Ascending aorta (tissue), 2 donors: ENCODE measurements at regions of chr7 and their contacts with region 1.

Region 1: GRCh38 chr7:45013465-45013967 is 13.5 kb downstream of the CCM2 start:
- DNase-seq: no peak
- H3K4me3 ChIP-seq: no peak overlapping the region
- H3K27ac ChIP-seq: no peak overlapping the region
- H3K4me1 ChIP-seq: no peaks in the 10 kb centered on the region
- H3K27me3 ChIP-seq: no peaks in the 10 kb centered on the region
- CTCF ChIP-seq: no peak

Region 2: GRCh38 chr7:44867073-44867995 is 146.2 kb before region 1 on chr7:
- intact Hi-C with region 1: no loop called
- DNase-seq: no peak
- H3K4me3 ChIP-seq: no peak overlapping the region
- H3K27ac ChIP-seq: no peak overlapping the region
- H3K4me1 ChIP-seq: no peaks in the 10 kb centered on the region
- H3K27me3 ChIP-seq: no peaks in the 10 kb centered on the region
- CTCF ChIP-seq: no peak

Region 3: DNA sequence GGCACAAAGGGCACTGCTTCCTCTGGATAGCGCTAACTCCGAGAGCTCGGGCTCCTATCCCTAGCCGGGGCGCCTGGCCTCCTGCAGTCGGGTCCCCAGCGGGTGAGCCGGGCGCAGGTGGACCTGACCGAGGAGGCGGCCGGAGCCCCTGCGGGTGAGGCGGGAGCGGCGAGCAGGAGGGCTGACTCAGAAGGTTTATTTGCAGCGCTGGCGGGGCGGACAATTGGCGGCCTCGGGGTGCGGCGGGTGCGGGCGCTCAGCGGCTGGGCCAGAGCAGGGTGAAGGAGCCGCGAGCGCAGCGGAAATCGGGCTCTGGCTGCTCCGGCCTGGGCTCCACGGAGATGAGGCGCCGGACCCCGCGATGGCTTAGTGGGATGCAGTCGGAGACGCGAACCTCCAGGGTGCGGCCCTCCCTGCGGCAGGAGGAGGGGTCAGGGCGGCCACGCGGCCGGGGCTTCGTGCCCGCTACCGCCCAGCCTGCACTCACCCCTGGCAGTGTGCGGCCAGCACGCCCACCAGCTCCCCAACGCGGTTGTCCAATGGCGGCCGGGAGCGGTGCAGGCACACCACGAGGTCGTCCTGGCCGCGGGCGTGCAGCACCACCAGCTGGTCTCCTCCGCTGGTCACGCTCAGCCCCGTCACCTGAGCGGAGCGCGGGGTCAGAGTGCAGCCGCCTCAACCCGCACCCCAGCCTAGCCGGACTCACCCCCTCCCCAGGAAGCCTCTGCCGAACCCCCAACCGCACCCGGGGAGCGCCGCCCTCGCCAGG is 50.8 kb before region 1 on chr7:
- intact Hi-C with region 1: loop called (anchors 10 kb)
- DNase-seq: no peak
- H3K4me3 ChIP-seq: peak overlapping the region; percentile 50 to 73
- H3K27ac ChIP-seq: no peak overlapping the region
- H3K4me1 ChIP-seq: peaks cover 3 to 4% of the 10 kb centered on the region in 2 donors
- H3K27me3 ChIP-seq: no peaks in the 10 kb centered on the region
- CTCF ChIP-seq: no peak

Region 4: DNA sequence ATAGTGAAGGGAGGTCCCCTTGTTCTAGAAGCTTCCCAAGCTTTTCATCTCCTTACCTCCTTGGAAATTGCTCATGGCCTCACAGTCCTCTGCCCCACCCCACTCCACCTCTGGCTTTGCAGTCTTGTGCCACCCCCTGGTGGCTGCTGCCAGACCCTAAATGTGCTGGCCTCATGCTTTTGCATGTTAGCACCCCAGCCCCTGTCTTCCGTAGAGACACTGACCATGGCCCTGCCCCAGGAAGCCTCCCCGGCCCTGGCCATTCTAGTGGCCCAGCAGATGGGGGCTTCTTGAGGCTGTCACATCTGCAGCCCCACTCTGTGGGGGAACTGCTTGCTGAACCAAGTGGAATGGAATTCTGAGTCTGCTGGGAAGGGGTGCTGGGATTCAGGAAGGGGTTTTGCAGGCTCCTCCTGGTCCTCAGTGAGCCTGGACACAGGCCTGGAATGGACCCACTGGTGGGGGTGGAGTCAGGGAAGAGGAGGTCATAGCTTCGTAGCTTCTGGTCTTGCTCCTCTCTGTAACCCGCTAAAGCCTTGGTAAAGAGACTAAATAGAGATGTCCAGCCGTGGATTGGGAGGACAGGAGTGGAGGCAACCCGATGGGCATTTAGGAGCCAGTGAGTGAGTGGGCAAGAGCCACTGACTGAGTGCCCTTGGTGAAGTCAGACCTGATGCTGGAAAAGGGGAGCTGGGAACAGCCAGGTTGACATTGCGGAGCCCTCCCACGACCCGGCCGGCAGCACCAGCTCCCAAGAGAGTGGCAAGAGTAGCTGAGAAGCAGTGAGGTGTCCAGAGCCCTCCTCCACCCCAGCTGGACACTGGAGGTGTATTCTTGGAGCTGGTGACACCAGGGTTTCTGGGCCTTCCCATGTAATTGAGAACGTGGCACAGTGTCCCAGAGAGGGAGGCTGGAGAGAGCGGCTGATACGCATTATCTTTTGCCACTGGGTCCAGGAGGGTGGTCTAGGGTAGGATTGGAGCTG is 165.0 kb after region 1 on chr7:
- intact Hi-C with region 1: no loop called
- DNase-seq: peak in 1 of 2 donors; percentile 39
- H3K4me3 ChIP-seq: no peak overlapping the region
- H3K27ac ChIP-seq: no peak overlapping the region
- H3K4me1 ChIP-seq: no peaks in the 10 kb centered on the region
- H3K27me3 ChIP-seq: no peaks in the 10 kb centered on the region
- CTCF ChIP-seq: no peak